ENCODE measurements at regions of chr14 and their contacts with region 1.

Region 1: DNA sequence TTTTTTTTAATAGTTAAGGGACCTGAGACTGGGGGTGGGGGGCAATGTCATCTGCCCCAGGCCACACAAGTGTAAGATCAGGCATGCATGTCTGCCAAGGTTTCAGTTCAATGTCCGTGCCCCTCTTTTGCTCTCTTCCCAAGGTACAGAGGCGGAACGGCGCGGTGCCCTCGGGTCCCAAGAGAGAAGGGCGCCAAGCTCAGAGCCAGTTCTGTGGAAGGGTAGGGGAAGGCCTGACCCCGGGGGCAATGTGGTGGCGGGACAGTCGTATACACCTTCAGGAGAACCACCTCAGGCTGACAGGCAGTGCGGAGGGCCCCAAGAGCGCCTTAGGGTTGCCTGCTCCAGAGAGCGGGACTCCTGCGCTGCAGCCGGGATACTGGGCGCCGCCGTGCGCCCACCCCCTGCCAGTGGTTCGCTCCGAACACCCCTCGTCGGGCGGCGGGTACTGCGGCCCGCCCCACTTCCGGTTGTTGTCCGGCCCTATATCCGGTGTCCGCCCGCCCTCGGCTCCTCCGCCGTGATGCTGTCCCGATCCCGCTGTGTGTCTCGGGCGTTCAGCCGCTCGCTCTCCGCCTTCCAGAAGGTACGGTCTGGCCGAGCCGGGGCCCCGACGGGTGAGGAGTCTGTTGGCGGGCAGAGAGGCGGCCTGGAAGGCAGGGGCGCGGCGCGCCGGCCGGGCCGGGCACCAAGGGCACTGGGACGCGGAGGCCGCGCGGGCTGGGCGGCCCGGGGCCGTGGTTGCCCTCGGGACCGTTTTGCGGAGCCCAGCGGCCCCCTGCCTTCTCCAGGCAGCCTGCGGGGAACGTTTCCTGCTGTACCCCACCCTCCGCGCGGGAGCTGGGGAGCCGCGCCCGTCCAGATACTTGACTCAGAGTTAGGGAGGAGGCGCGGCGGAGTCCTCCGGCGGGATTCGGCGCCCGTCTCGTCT is at the start of gene DLST:
- DNase-seq: peak; percentile 89
- ATAC-seq: peak; percentile 90
- H3K4me3 Mint-ChIP-seq: peak within 1 kb of the TSS; percentile 98
- H3K27ac Mint-ChIP-seq: peak within 1 kb of the TSS; percentile 98
- H3K4me1 Mint-ChIP-seq: peaks cover 59% of the 10 kb centered on the region
- H3K27me3 Mint-ChIP-seq: no peaks in the 10 kb centered on the region
- total RNA-seq, gene DLST: 106 to 108 TPM

Region 2: GRCh38 chr14:74867673-74868072 is 14.0 kb before region 1 on chr14:
- CTCF ChIA-PET with region 1: interaction called, 186 read pairs
- POLR2A ChIA-PET with region 1: interaction called, 41 read pairs
- DNase-seq: peak; percentile 86
- ATAC-seq: peak; percentile 97
- H3K4me3 Mint-ChIP-seq: peak overlapping the region; percentile 46
- H3K27ac Mint-ChIP-seq: peak overlapping the region; percentile 86
- H3K4me1 Mint-ChIP-seq: peaks cover 33% of the 10 kb centered on the region
- H3K27me3 Mint-ChIP-seq: no peaks in the 10 kb centered on the region

Region 3: DNA sequence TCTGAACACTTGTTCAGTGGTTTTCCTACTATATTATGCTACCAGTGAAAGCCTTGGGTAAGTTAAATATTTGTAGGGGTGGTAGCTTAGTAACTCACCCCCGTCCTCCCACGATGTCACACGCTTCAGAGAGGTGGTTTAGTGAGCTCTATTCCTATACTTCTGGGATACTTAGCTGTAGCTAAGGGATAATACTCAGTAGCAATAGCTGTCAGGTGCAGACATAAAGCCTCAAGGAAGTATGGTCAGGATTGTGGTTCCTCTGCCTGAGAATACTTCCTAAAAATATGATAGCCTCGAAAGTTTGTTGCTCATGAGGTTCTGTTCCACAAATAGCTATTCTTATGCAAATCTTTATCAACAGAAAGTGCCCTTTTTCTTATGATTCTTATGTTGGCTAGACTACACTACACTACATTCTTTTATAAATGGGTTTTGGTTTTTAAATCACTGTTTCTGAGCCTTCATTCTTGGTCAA is 12.0 kb after region 1 on chr14:
- CTCF ChIA-PET with region 1: interaction called, 10 read pairs
- POLR2A ChIA-PET with region 1: interaction called, 12 read pairs
- DNase-seq: no peak
- ATAC-seq: no peak
- H3K4me3 Mint-ChIP-seq: no peak overlapping the region
- H3K27ac Mint-ChIP-seq: no peak overlapping the region
- H3K4me1 Mint-ChIP-seq: peaks cover 17% of the 10 kb centered on the region
- H3K27me3 Mint-ChIP-seq: no peaks in the 10 kb centered on the region

Region 4: DNA sequence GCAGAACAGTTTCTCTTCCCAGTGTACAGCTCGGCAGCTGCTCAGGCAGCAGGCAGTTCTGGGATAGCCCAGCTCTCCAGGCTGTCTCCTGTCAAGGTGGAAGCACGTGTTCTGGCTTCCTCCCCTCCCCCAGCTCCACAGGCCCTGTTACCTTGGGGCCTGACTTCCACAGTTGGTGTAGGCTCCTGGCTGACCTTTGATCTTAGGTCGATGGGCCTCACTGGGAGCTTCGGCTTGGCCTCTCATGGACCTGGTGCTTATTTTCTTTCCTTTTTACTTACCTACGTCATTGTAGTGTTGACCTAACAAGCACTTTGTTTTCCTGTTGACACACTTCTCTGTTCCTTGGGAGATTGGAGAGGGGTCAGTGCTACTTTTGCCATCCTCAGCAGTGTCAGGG is 17.0 kb after region 1 on chr14:
- CTCF ChIA-PET with region 1: interaction called, 119 read pairs
- POLR2A ChIA-PET with region 1: interaction called, 12 read pairs
- DNase-seq: no peak
- ATAC-seq: no peak
- H3K4me3 Mint-ChIP-seq: no peak overlapping the region
- H3K27ac Mint-ChIP-seq: no peak overlapping the region
- H3K4me1 Mint-ChIP-seq: peaks cover 9% of the 10 kb centered on the region
- H3K27me3 Mint-ChIP-seq: no peaks in the 10 kb centered on the region

Measured in activated CD8-positive, alpha-beta T cell treated with anti-CD3 and anti-CD28 coated beads, Interleukin-2, amount 10 ng/mL, durations not matched to agents 7 days and 5 days (primary cell).